ENCODE measurements at regions of chr10 and their contacts with region 1.

Region 1: GRCh38 chr10:26881600-26882331 is 21.0 kb upstream of the ABI1 start:
- DNase-seq: peak; percentile 65
- ATAC-seq: peak; percentile 70
- H3K4me3 ChIP-seq: no peak overlapping the region
- H3K4me3 Mint-ChIP-seq: no peak overlapping the region
- H3K27ac ChIP-seq: no peak overlapping the region
- H3K27ac Mint-ChIP-seq: no peak overlapping the region
- H3K4me1 ChIP-seq: no peaks in the 10 kb centered on the region
- H3K4me1 Mint-ChIP-seq: peaks cover 1% of the 10 kb centered on the region
- H3K27me3 ChIP-seq: peaks cover 0 to 3% (median 1%) of the 10 kb centered on the region in 4 experiments
- H3K27me3 Mint-ChIP-seq: peaks cover 22% of the 10 kb centered on the region
- CTCF ChIP-seq: peak; percentile 80

Region 2: DNA sequence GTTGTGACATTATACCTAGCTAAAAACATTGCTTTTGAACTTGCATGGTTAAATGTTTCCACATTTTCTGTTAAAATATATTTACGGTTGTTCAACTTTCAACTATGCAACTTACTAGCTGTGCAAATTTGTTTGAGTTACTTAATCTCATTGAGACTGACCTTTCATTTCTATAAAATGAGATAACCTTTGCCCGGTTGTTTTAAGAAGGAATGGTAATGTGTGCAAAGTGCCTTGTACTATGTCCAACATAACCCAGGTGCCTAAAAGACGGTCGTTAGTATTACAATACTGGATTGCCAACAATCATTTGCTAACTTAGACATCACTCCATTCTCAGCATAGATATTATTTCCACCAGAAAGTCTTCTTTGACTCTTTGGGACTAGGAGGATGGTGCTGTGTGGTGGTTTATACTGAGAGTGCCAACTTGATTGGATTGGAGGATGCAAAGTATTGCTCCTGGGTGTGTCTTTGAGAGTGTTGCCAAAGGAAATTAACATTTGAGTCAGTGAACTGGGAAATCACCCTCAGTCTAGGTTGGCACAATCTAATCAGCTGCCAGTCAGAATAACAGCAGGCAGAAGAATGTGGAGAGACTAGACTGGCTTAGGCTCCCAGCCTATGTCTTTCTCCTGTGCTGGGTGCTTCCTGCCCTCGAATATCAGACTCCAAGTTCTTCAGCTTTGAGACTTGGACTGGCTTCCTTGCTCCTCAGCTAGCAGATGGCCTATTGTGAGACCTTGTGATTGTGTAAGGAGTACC is 269.4 kb before region 1 on chr10:
- CTCF ChIA-PET with region 1: interaction called, 4 read pairs
- POLR2A ChIA-PET with region 1: no interaction called
- intact Hi-C with region 1: loop called (anchors 5 kb)
- DNase-seq: no peak
- ATAC-seq: no peak
- H3K4me3 ChIP-seq: no peak overlapping the region
- H3K4me3 Mint-ChIP-seq: no peak overlapping the region
- H3K27ac ChIP-seq: no peak overlapping the region
- H3K27ac Mint-ChIP-seq: no peak overlapping the region
- H3K4me1 ChIP-seq: no peaks in the 10 kb centered on the region
- H3K4me1 Mint-ChIP-seq: no peaks in the 10 kb centered on the region
- H3K27me3 ChIP-seq: no peaks in the 10 kb centered on the region
- H3K27me3 Mint-ChIP-seq: peaks cover 11% of the 10 kb centered on the region
- CTCF ChIP-seq: no peak

Region 3: GRCh38 chr10:26682931-26683330 is 198.8 kb before region 1 on chr10:
- CTCF ChIA-PET with region 1: interaction called, 12 read pairs
- POLR2A ChIA-PET with region 1: no interaction called
- intact Hi-C with region 1: loop called (anchors 1 kb)
- DNase-seq: no peak
- ATAC-seq: no peak
- H3K4me3 ChIP-seq: no peak overlapping the region
- H3K4me3 Mint-ChIP-seq: no peak overlapping the region
- H3K27ac ChIP-seq: no peak overlapping the region
- H3K27ac Mint-ChIP-seq: no peak overlapping the region
- H3K4me1 ChIP-seq: peaks cover 0 to 3% of the 10 kb centered on the region in 2 donors
- H3K4me1 Mint-ChIP-seq: peaks cover 5% of the 10 kb centered on the region
- H3K27me3 ChIP-seq: peaks cover 0 to 3% (median 2%) of the 10 kb centered on the region in 4 experiments
- H3K27me3 Mint-ChIP-seq: peaks cover 8% of the 10 kb centered on the region
- CTCF ChIP-seq: no peak

Region 4: DNA sequence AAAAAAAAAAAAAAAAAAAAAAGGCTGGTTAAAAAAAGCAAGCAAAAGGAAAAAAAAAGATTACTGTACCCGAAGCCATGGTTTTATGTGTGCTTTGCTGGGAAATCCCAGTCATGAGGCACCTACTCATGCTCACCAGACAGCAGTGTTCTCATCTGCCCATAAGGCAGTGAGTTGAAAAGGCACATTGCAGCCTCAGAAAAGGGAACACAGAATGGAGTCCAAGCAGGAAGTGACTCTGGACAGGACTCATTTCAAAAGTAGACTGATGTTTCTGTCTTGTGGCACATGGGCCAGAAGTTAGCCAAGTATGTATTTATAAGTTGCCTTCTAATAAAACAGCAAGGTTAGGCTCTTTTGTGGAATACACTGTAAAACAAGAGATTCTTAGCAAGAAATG is 144.0 kb before region 1 on chr10:
- CTCF ChIA-PET with region 1: interaction called, 452 read pairs
- POLR2A ChIA-PET with region 1: no interaction called
- intact Hi-C with region 1: no loop called
- DNase-seq: peak; percentile 86
- ATAC-seq: peak; percentile 69
- H3K4me3 ChIP-seq: no peak overlapping the region
- H3K4me3 Mint-ChIP-seq: peak overlapping the region; percentile 52
- H3K27ac ChIP-seq: peak overlapping the region; percentile 87
- H3K27ac Mint-ChIP-seq: peak overlapping the region; percentile 89
- H3K4me1 ChIP-seq: peaks cover 36 to 49% of the 10 kb centered on the region in 2 donors
- H3K4me1 Mint-ChIP-seq: peaks cover 50% of the 10 kb centered on the region
- H3K27me3 ChIP-seq: no peaks in the 10 kb centered on the region
- H3K27me3 Mint-ChIP-seq: no peaks in the 10 kb centered on the region
- CTCF ChIP-seq: no peak

Region 5: DNA sequence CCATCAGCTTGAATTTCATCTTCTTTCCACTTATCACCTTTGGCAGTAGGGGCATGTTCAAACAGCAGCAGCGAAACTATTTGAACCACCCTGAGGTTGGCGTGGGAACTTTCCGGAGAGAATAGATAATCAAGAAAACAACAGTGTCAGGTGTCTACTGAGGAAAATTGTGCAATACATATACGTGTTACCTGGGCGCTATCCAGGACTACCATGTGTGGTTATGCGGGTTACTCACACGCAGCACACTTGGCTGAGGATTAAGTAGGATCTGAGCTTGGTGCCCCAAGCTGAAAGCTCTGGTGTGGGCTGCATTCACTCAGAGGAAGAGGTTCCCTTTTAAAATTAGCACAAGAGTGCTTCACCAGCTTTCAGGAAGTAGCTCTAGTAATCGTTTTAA is 12.2 kb before region 1 on chr10:
- CTCF ChIA-PET with region 1: interaction called, 11 read pairs
- POLR2A ChIA-PET with region 1: no interaction called
- intact Hi-C with region 1: no loop called
- DNase-seq: no peak
- ATAC-seq: peak; percentile 17
- H3K4me3 ChIP-seq: no peak overlapping the region
- H3K4me3 Mint-ChIP-seq: peak overlapping the region; percentile 50
- H3K27ac ChIP-seq: no peak overlapping the region
- H3K27ac Mint-ChIP-seq: no peak overlapping the region
- H3K4me1 ChIP-seq: peaks cover 3 to 8% of the 10 kb centered on the region in 2 donors
- H3K4me1 Mint-ChIP-seq: peaks cover 6% of the 10 kb centered on the region
- H3K27me3 ChIP-seq: no peaks in the 10 kb centered on the region
- H3K27me3 Mint-ChIP-seq: peaks cover 6% of the 10 kb centered on the region
- CTCF ChIP-seq: no peak

Region 6: GRCh38 chr10:27019827-27020226 is 138.1 kb after region 1 on chr10:
- CTCF ChIA-PET with region 1: no interaction called
- POLR2A ChIA-PET with region 1: no interaction called
- intact Hi-C with region 1: no loop called
- DNase-seq: no peak
- ATAC-seq: no peak
- H3K4me3 ChIP-seq: no peak overlapping the region
- H3K4me3 Mint-ChIP-seq: no peak overlapping the region
- H3K27ac ChIP-seq: no peak overlapping the region
- H3K27ac Mint-ChIP-seq: no peak overlapping the region
- H3K4me1 ChIP-seq: no peaks in the 10 kb centered on the region
- H3K4me1 Mint-ChIP-seq: no peaks in the 10 kb centered on the region
- H3K27me3 ChIP-seq: no peaks in the 10 kb centered on the region
- H3K27me3 Mint-ChIP-seq: no peaks in the 10 kb centered on the region
- CTCF ChIP-seq: no peak